ENCODE measurements at regions of chr6 and their contacts with region 1.

Region 1: GRCh38 chr6:73129653-73130443 is 95.4 kb downstream of the KHDC1L start:
- DNase-seq: peak; percentile 83
- ATAC-seq: peak; percentile 91 to 95
- H3K4me3 ChIP-seq: no peak overlapping the region
- H3K27ac ChIP-seq: no peak overlapping the region
- H3K4me1 ChIP-seq: no peaks in the 10 kb centered on the region
- H3K27me3 ChIP-seq: no peaks in the 10 kb centered on the region
- CTCF ChIP-seq: peak; percentile 95

Region 2: GRCh38 chr6:72411872-72412708 is 717.8 kb before region 1 on chr6:
- intact Hi-C with region 1: loop called (anchors 10 kb)
- DNase-seq: peak; percentile 69
- ATAC-seq: peak; percentile 87 to 96
- H3K4me3 ChIP-seq: no peak overlapping the region
- H3K27ac ChIP-seq: no peak overlapping the region
- H3K4me1 ChIP-seq: no peaks in the 10 kb centered on the region
- H3K27me3 ChIP-seq: peaks cover 5% of the 10 kb centered on the region
- CTCF ChIP-seq: peak; percentile 100

Region 3: GRCh38 chr6:72619883-72620696 is 509.8 kb before region 1 on chr6:
- intact Hi-C with region 1: loop called (anchors 5 kb)
- DNase-seq: peak; percentile 50
- ATAC-seq: peak; percentile 56 to 59
- H3K4me3 ChIP-seq: peak overlapping the region; percentile 60
- H3K27ac ChIP-seq: no peak overlapping the region
- H3K4me1 ChIP-seq: peaks cover 35% of the 10 kb centered on the region
- H3K27me3 ChIP-seq: peaks cover 30% of the 10 kb centered on the region
- CTCF ChIP-seq: no peak

Region 4: GRCh38 chr6:73085443-73085871 is 44.4 kb before region 1 on chr6:
- intact Hi-C with region 1: no loop called
- DNase-seq: no peak
- ATAC-seq: no peak
- H3K4me3 ChIP-seq: no peak overlapping the region
- H3K27ac ChIP-seq: no peak overlapping the region
- H3K4me1 ChIP-seq: no peaks in the 10 kb centered on the region
- H3K27me3 ChIP-seq: no peaks in the 10 kb centered on the region
- CTCF ChIP-seq: no peak

Region 5: DNA sequence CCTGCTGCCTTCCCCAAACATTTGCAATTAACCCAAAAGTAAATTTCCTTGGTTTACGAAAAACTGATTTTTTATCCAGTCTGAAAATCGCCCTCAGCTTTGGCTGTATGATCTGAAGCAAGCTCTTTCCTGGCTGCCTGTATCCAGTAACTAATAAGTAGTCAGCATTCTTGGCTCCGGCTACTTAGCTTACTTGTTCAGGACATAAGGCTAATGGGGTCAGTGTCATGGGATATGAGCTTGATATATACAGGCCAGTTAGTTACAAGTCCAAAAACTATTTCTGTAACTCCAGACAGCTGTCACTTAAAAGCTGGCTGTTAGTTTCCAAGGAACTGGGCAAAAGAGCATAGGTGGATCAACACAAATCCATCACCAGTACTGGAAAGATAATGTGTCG is 39.3 kb after region 1 on chr6:
- intact Hi-C with region 1: no loop called
- DNase-seq: no peak
- ATAC-seq: no peak
- H3K4me3 ChIP-seq: no peak overlapping the region
- H3K27ac ChIP-seq: no peak overlapping the region
- H3K4me1 ChIP-seq: no peaks in the 10 kb centered on the region
- H3K27me3 ChIP-seq: no peaks in the 10 kb centered on the region
- CTCF ChIP-seq: no peak